Natural killer cell (primary cell): ENCODE measurements at regions of chr15 and their contacts with region 1.

Region 1: DNA sequence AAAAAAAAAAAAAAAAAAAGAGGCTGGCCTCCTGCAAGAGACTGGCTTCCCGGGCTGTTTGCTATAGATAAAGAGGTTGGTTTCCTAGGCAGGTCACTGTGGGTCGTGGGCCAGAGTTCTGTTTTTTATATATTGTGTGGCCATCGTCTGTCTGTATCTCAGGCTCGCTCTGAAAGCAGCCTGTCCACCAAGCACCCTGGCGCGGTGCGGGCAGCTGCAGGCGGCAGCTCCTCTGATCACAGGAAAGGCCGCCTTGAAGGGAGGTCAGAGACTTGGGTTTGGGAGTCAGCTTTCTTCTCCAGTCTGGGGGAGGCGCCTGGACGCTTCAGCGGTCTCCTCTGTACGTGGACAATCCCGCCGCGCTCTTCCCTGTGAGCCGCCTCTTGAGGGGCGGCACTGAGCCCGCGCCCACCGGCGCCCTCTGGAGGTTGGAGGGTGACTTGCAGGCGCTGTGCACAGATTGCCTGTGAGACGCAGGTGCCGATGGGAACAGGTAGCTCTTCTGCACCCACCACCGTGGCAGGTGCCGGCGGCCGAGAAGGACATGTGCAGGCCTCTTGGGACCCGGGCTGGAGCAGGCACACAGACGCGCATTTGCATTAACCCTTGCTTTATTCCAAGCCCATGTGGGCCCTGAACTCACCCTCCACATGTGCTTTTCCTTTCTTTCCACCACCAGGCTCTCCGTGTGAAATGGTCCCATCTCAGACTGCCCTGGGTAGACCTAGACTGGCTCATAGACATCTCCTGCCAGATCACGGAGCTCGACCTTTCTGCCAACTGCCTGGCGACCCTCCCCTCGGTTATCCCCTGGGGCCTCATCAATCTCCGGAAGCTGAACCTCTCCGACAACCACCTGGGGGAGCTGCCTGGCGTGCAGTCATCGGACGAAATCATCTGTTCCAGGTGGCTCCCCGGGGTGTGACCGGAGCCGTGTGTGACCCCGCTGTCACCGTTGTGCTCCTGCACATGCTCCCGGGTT is 89.3 kb downstream of the LRRK1 start:
- DNase-seq: peak; percentile 84 to 90
- ATAC-seq: peak; percentile 96 to 99 (median 98)
- H3K4me3 ChIP-seq: peak overlapping the region; percentile 82
- H3K4me3 Mint-ChIP-seq: peak overlapping the region; percentile 89
- H3K27ac ChIP-seq: no peak overlapping the region
- H3K27ac Mint-ChIP-seq: no peak overlapping the region
- H3K4me1 ChIP-seq: peaks cover 18% of the 10 kb centered on the region
- H3K4me1 Mint-ChIP-seq: peaks cover 16 to 18% of the 10 kb centered on the region in 2 donors
- H3K27me3 ChIP-seq: no peaks in the 10 kb centered on the region
- H3K27me3 Mint-ChIP-seq: peaks cover 0 to 2% of the 10 kb centered on the region in 2 donors
- CTCF ChIP-seq: peak; percentile 97

Region 2: GRCh38 chr15:99961011-99961441 is 1047.4 kb before region 1 on chr15:
- intact Hi-C with region 1: no loop called
- DNase-seq: peak; percentile 7 to 23
- ATAC-seq: no peak
- H3K4me3 ChIP-seq: no peak overlapping the region
- H3K4me3 Mint-ChIP-seq: no peak overlapping the region
- H3K27ac ChIP-seq: no peak overlapping the region
- H3K27ac Mint-ChIP-seq: no peak overlapping the region
- H3K4me1 ChIP-seq: no peaks in the 10 kb centered on the region
- H3K4me1 Mint-ChIP-seq: no peaks in the 10 kb centered on the region
- H3K27me3 ChIP-seq: no peaks in the 10 kb centered on the region
- H3K27me3 Mint-ChIP-seq: peaks cover 18 to 25% of the 10 kb centered on the region in 2 donors
- CTCF ChIP-seq: no peak

Region 3: DNA sequence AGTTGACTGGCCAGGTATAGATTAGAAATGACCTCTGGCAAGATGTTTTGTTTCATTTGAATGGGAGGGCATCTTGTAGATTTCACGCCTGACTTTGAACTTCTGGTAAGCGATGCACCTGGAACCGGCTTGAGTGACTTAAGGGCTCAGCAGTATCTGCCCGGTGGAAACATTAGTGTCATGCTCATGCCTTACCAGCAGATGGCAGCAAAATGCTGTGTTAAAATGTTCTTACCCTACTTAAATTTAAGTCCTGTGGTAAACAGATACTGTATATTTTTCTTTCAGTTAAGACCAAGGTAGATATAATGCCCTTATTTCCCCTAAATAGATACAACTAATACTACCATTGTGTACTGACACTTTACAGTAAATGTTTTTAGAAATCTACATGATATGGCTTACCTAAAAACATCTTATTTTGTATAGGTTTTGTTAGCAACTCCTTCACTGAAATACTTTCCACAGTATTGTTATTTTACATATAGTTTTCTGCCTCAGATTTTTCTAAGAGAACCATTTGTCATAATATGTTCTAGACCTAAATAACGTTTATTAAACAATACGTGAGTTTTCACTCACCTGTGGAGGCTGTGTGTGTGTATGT is 380.6 kb before region 1 on chr15:
- intact Hi-C with region 1: loop called (anchors 1 kb)
- DNase-seq: peak; percentile 33 to 86
- ATAC-seq: peak; percentile 86 to 92 (median 86)
- H3K4me3 ChIP-seq: no peak overlapping the region
- H3K4me3 Mint-ChIP-seq: no peak overlapping the region
- H3K27ac ChIP-seq: no peak overlapping the region
- H3K27ac Mint-ChIP-seq: no peak overlapping the region
- H3K4me1 ChIP-seq: no peaks in the 10 kb centered on the region
- H3K4me1 Mint-ChIP-seq: peaks cover 19 to 27% of the 10 kb centered on the region in 2 donors
- H3K27me3 ChIP-seq: no peaks in the 10 kb centered on the region
- H3K27me3 Mint-ChIP-seq: no peaks in the 10 kb centered on the region
- CTCF ChIP-seq: peak; percentile 87

Region 4: DNA sequence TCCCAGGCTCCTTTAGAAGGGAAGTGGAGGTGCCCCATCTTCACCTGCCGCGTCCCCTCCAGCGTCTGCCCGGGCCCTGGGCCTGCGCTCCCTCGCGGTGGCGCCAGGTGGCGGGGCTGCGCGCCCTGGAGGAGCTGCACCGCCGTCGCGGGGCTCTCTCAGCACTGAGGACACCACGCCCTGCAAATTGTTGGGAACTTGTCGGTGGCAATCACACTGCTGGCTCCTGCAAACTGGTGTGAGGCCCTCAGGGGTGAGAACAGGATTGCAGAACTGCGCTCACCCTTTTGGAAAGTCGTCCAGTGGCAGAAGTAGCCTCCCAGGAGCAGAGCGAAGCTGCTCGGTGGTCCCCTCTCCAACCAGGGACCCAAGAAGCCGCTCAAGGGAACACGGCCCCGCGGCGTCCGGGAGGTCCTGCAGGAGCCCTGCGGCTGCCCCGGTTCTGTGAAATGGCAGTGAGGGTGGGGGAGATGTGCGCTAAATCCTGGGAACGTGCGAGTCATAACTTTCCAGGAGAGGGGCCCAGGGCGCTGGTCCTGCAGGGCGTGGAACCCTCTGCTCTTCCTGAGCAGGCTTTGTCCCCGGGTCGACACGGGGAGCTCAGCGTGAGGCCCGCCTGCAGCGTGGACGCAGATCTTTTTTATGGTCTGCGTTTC is 90.3 kb before region 1 on chr15:
- intact Hi-C with region 1: loop called (anchors 5 kb)
- DNase-seq: peak; percentile 26 to 67
- ATAC-seq: peak; percentile 55 to 85 (median 81)
- H3K4me3 ChIP-seq: peak overlapping the region; percentile 45
- H3K4me3 Mint-ChIP-seq: peak overlapping the region; percentile 80
- H3K27ac ChIP-seq: no peak overlapping the region
- H3K27ac Mint-ChIP-seq: no peak overlapping the region
- H3K4me1 ChIP-seq: peaks cover 16% of the 10 kb centered on the region
- H3K4me1 Mint-ChIP-seq: peaks cover 0 to 12% of the 10 kb centered on the region in 2 donors
- H3K27me3 ChIP-seq: peaks cover 9% of the 10 kb centered on the region
- H3K27me3 Mint-ChIP-seq: peaks cover 50 to 62% of the 10 kb centered on the region in 2 donors
- CTCF ChIP-seq: peak; percentile 26

Region 5: DNA sequence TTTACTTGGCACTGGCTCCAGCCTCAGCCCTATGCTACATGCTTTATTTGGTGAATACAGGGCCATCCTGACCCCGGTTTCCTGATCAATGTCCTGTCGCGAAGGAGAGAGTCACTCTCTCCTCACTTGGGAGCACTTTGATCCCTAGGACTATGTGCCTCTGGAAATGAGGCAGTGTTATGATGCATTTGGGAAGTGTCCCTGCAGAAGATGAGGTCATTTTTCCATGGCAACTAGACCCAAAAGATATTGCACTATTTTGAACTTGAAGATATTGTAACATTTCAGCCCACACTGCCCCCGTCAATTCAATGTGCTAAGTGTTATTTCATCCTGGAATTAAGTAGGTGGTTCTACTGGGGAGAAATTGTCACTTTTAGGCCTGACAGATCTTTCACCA is 21.3 kb before region 1 on chr15:
- intact Hi-C with region 1: no loop called
- DNase-seq: no peak
- ATAC-seq: no peak
- H3K4me3 ChIP-seq: no peak overlapping the region
- H3K4me3 Mint-ChIP-seq: no peak overlapping the region
- H3K27ac ChIP-seq: no peak overlapping the region
- H3K27ac Mint-ChIP-seq: no peak overlapping the region
- H3K4me1 ChIP-seq: no peaks in the 10 kb centered on the region
- H3K4me1 Mint-ChIP-seq: no peaks in the 10 kb centered on the region
- H3K27me3 ChIP-seq: no peaks in the 10 kb centered on the region
- H3K27me3 Mint-ChIP-seq: peaks cover 6 to 42% of the 10 kb centered on the region in 2 donors
- CTCF ChIP-seq: no peak

Region 6: DNA sequence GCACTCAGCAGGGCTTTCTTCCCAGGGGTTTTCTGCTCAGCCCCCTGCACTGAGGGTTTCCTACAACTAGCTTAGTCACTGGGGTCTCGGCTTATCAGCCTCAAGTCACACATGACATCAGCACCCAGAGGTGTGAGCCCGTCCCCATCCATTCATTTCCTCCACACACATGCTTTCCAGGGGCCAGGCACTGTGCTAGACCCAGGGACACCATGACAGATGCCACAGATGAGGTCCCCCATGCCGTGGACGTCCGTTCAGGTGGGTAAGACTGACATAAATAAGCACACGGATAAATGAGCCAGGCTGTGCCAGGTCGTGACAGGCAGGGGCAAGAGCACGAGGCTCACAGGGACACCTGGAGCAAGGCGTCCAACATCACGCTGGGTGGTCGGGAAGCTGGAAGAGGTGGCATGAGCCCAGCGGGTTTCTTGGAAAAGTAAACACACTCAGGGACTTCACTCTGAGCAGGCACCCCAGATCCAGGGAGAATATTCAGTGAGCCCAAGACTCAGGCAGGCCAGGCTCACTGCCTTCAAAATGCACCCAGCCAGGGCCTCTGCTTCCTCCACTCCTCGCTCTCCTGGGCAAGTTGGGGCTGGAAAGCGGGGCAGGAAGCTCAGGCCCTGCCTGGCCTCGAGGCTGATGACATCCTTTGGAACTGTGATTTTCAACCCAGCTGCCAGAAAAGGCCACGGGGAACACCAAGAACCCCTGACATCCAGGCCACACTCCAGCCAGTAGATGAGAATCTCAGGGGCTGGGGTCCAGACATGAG is 104.1 kb after region 1 on chr15:
- intact Hi-C with region 1: no loop called
- DNase-seq: no peak
- ATAC-seq: no peak
- H3K4me3 ChIP-seq: no peak overlapping the region
- H3K4me3 Mint-ChIP-seq: no peak overlapping the region
- H3K27ac ChIP-seq: no peak overlapping the region
- H3K27ac Mint-ChIP-seq: no peak overlapping the region
- H3K4me1 ChIP-seq: peaks cover 6% of the 10 kb centered on the region
- H3K4me1 Mint-ChIP-seq: no peaks in the 10 kb centered on the region
- H3K27me3 ChIP-seq: no peaks in the 10 kb centered on the region
- H3K27me3 Mint-ChIP-seq: peaks cover 0 to 6% of the 10 kb centered on the region in 2 donors
- CTCF ChIP-seq: no peak